Activated CD4-positive, alpha-beta T cell treated with anti-CD3 and anti-CD28 coated beads, Interleukin-2, amount 10 ng/mL, durations not matched to agents 24 days and 14 days (primary cell): ENCODE measurements at regions of chr5 and their contacts with region 1.

Region 1: DNA sequence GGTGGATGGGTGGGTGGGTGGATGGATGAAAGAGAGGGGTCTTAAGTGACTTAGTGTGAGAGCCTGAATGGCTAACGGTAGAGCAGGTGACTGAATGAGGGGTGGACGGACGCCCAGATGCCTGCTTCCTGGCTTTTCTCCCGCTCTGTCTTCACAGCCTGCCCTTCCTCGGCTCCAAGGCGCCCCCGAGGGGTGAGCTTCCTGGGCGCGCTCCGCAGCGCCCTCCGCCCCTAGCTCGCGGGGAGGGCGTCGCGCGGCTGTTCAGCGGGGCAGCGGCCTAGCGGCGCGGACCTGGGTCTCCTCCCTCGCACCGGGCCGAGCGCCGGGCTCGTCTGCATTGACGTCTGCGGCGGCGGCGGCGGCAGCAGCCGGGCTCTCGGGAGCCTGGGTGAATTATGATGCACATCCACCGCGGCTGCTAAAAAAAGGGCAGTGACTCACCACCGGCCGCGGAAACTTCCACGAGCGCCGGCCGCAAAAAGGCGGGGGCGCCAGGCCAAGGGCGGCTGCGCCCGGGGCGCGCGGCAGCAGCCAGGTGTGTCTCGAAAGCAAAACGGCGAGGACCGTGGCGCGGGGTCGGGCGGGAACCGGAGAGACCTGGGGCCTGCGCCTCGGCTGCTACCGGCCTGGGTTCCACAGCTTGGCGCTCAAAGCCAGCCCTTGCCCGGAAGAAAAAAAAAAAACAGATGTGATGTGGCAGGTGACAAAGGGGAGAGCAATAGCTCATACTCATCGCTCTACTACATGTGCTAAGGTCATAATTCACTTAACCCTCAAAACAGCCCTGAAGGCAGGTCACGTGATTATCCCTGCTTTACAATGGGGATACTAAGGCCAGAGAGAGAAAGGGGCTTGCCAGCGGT is 143.0 kb upstream of the ADRA1B start:
- DNase-seq: peak; percentile 94
- H3K4me3 Mint-ChIP-seq: peak overlapping the region; percentile 51
- H3K27ac Mint-ChIP-seq: peak overlapping the region; percentile 63
- H3K4me1 Mint-ChIP-seq: peaks cover 24% of the 10 kb centered on the region
- H3K27me3 Mint-ChIP-seq: peaks cover 25% of the 10 kb centered on the region

Region 2: GRCh38 chr5:159178978-159179377 is 594.3 kb before region 1 on chr5:
- intact Hi-C with region 1: loop called (anchors 10 kb)
- DNase-seq: no peak
- H3K4me3 Mint-ChIP-seq: peak overlapping the region; percentile 68
- H3K27ac Mint-ChIP-seq: peak overlapping the region; percentile 94
- H3K4me1 Mint-ChIP-seq: peaks cover 60% of the 10 kb centered on the region
- H3K27me3 Mint-ChIP-seq: no peaks in the 10 kb centered on the region

Region 3: DNA sequence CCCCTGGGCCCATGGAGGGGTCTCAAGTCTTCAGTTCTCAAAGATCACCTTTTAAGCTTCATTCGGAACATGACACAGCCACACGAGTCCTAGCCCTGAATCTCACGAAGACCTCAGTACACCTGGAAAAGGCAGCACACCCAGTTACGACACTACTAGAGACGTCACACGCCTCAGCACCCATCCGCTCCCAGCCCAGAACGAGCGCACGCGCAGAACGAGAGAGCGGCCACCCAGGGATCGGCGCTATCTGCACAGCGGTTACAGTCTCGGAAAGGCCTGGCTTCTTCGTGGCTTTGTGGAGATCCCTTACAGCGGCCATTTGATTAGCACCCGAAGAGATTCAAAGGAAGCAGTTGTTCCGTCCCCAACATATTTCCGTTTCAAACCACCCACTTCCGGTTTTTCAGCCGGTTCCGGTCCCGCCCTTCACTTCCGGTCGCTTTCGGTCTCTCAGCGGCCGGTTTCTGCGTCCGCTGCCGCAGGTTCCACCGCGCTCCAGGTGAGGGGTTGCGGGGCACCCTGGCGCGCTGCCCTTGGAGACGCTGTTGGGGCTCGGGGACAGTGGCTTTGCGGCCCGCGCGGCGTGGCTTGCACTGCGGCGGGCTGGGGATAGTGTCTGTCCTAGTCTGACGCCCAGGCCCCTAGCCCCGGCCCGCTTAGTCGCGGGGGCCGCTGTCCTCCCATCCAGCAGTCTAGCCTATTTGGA is 510.3 kb before region 1 on chr5 and contains the start of gene UBLCP1:
- intact Hi-C with region 1: loop called (anchors 5 kb)
- DNase-seq: peak; percentile 92
- H3K4me3 Mint-ChIP-seq: peak within 1 kb of the TSS; percentile 92
- H3K27ac Mint-ChIP-seq: peak within 1 kb of the TSS; percentile 97
- H3K4me1 Mint-ChIP-seq: peaks cover 24% of the 10 kb centered on the region
- H3K27me3 Mint-ChIP-seq: peaks cover 3% of the 10 kb centered on the region
- total RNA-seq, gene UBLCP1: 30.2 and 31.2 TPM in 2 replicates

Region 4: DNA sequence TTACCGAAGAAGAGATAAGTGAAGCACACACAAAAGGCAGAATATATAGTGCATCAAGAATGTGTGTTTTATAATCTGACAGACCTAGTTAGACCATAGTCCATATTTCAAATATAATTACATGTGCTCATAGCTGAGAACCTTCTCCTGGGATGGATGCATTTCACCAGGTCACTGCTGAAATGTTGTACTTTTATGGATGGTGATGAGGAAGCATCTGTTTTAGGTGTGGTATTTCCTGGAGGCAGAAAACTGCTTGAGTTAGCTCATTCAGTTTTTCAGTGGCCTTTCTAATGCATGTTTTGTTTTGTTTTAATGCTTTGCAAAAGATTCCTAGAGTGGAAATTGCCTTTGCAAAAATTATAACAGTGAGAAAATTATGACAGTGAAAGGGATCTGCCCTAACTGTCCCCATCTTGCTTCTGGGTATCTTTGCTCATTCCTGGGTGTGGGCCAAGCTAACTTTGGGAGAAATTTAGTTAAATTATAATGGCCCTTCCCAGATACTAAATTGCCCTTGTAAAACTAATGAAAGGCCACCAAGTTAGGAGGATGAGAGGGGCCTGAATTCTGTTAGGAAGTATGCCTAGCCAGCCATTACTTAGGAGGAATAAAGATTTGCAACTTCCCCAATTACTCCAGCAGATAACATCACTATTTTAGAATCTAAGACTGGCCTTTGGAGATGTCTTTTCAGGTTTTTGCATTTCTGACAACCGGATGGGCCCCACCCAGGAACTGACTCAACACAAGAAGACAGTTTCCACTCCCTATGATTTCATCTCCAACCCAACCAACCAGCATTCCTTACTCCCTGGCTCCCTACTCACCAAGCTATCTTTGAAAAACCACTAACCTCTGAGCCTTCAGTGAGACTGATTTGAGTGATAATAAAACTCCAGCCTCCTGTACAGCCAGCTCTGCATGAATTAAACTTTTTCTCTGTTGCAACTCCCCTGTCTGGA is 436.0 kb before region 1 on chr5:
- intact Hi-C with region 1: loop called (anchors 2 kb)
- DNase-seq: peak; percentile 88
- H3K4me3 Mint-ChIP-seq: peak overlapping the region; percentile 48
- H3K27ac Mint-ChIP-seq: peak overlapping the region; percentile 76
- H3K4me1 Mint-ChIP-seq: peaks cover 64% of the 10 kb centered on the region
- H3K27me3 Mint-ChIP-seq: peaks cover 4% of the 10 kb centered on the region

Region 5: DNA sequence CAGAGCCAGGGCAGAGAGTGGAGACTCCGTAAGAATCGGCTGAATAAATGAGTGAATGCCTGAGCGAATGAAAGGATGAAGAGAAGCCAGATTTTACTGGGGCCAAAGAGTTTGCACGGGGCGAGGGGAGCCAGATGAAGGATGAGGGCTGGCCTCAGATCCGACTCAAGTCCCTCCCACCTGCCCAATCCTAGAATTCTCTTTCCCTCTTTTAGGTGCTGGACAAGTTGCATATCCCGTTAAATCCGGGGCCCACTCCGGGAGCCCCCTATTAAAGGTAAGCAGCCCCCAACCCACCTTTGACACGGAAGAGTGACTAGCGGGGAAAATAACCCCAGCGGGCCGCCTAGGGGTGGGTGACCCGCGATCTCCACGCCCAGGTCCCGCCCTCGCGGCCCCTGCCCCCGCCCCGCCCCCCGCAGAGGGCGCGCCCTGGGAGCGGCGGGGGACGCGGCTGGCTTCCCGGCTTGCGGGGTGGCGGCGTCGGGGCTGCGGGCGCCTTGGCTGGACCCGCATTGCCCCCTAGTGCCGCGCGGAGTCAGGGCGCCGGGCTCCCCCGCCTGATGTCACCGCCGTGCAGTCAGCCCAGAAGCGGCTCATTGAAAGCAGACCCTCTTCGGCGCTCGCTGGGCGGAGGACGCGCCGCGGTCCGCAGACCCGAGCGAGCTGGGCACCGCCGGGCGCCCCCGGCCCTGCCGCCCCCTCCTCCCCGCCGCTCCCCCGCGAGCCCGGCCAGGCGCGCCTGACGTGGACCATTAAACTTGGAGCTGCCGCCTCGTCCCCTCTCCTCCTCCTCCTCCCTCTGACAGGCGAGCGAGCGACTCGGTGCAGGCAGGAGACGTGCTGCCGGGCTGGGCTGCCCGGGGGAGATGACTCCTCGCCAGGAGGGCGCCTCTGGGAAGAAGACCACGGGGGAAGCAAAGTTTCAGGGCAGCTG is 142.9 kb after region 1 on chr5 and contains the start of gene ADRA1B:
- intact Hi-C with region 1: loop called (anchors 5 kb)
- DNase-seq: peak; percentile 75
- H3K4me3 Mint-ChIP-seq: peak within 1 kb of the TSS; percentile 60
- H3K27ac Mint-ChIP-seq: no peak within 1 kb of the TSS
- H3K4me1 Mint-ChIP-seq: peaks cover 5% of the 10 kb centered on the region
- H3K27me3 Mint-ChIP-seq: peaks cover 48% of the 10 kb centered on the region
- total RNA-seq, gene ADRA1B: not detected in 2 replicates

Region 6: GRCh38 chr5:160008877-160009590 is 235.7 kb after region 1 on chr5 and contains the start of gene TTC1:
- intact Hi-C with region 1: loop called (anchors 1 kb)
- DNase-seq: peak; percentile 97
- H3K4me3 Mint-ChIP-seq: peak within 1 kb of the TSS; percentile 97
- H3K27ac Mint-ChIP-seq: peak within 1 kb of the TSS; percentile 99
- H3K4me1 Mint-ChIP-seq: peaks cover 25% of the 10 kb centered on the region
- H3K27me3 Mint-ChIP-seq: peaks cover 2% of the 10 kb centered on the region
- total RNA-seq, gene TTC1: 64.8 and 68.0 TPM in 2 replicates